A673 (cell line): ENCODE measurements at regions of chr12 and their contacts with region 1.

Region 1: GRCh38 chr12:45215419-45216229 is at the start of gene ANO6:
- DNase-seq: peak; percentile 97
- H3K4me3 ChIP-seq: peak within 1 kb of the TSS; percentile 68
- H3K27ac ChIP-seq: peak within 1 kb of the TSS; percentile 93
- H3K4me1 ChIP-seq: peaks cover 35% of the 10 kb centered on the region
- H3K27me3 ChIP-seq: no peaks in the 10 kb centered on the region
- CTCF ChIP-seq: peak; percentile 48; the same call in 1 of the 2 replicates
- total RNA-seq, gene ANO6: 59.3 TPM in 2 replicates

Region 2: DNA sequence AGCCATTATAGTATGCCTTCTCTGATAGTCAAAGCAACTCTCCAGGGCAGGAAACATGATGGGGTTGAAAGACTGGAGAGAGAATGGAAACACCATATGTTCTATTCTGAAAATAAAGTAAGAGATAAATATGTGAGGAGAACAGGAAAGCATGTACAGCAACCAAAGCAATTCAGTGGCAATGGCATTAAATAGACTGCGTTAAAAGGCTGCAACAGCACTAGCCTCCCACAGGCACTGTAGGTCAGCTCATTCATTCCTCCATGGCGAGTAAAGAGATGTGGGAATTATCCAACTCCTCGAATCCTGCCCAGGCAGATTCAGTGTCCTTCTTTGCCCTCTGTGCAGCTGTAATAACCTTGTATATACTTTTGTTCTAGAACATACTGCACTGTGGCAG is 44.1 kb after region 1 on chr12:
- CTCF ChIA-PET with region 1: no interaction called
- POLR2A ChIA-PET with region 1: no interaction called
- intact Hi-C with region 1: loop called (anchors 2 kb)
- DNase-seq: no peak
- H3K4me3 ChIP-seq: no peak overlapping the region
- H3K27ac ChIP-seq: peak overlapping the region; percentile 73
- H3K4me1 ChIP-seq: peaks cover 68% of the 10 kb centered on the region
- H3K27me3 ChIP-seq: no peaks in the 10 kb centered on the region
- CTCF ChIP-seq: no peak

Region 3: DNA sequence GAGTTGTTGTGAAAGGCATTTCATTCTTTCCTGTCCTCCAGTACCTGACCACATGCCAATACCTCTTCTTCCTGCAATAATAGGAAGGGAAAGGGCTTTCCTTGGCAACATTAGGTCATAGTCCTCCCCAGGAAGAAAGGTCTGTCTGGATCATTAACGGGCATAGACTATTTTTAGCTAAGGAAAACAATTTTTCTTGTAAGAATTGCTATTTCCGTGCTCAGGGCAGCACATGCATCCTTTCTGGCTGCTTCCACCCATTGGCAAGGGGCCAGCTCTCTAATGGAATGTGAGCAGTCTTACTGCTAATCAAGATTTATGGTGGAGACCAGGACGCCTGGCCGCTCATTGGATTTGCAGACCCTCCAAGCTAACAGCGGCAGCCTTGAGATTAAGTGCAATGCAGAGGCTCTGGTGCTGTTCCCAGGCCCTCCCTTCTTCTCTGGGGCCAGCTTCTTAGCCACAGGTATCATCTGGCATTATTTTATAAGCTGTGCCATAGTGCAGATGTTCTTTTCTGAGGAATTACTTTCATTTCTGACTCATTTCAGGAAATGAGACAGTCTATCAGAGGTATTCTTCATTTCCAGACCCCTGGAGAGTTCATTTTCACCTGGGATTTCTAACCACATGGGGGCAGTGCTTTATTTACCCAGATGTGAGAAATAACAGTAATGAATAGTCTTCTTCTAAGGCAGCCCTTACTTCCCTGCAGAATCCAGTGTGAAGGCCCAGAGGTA is 53.2 kb after region 1 on chr12:
- CTCF ChIA-PET with region 1: no interaction called
- POLR2A ChIA-PET with region 1: no interaction called
- intact Hi-C with region 1: loop called (anchors 2 kb)
- DNase-seq: peak; percentile 95
- H3K4me3 ChIP-seq: peak overlapping the region; percentile 3
- H3K27ac ChIP-seq: no peak overlapping the region
- H3K4me1 ChIP-seq: peaks cover 36% of the 10 kb centered on the region
- H3K27me3 ChIP-seq: no peaks in the 10 kb centered on the region
- CTCF ChIP-seq: peak; percentile 63

Region 4: DNA sequence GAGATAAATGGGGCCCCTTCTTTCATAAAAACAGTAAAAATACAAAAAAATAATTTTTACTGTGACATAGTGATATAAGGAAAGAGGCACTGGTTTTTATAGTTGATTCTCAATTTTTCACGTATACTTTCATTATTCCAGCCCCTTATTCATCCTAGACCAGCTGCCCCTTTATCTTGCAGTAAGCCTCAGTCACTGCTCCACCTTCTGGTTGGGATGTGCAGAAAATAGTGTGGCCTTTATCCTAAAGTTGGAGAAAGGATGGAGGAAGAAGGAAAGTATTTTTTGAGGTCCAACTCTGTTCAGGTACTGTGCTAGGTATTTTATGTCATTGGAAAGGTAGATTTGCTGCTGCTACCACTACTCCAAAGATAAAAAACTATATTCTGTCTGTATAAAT is 172.9 kb after region 1 on chr12:
- CTCF ChIA-PET with region 1: no interaction called
- POLR2A ChIA-PET with region 1: no interaction called
- intact Hi-C with region 1: loop called (anchors 2 kb)
- DNase-seq: peak; percentile 64
- H3K4me3 ChIP-seq: no peak overlapping the region
- H3K27ac ChIP-seq: no peak overlapping the region
- H3K4me1 ChIP-seq: no peaks in the 10 kb centered on the region
- H3K27me3 ChIP-seq: no peaks in the 10 kb centered on the region
- CTCF ChIP-seq: peak; percentile 73

Region 5: DNA sequence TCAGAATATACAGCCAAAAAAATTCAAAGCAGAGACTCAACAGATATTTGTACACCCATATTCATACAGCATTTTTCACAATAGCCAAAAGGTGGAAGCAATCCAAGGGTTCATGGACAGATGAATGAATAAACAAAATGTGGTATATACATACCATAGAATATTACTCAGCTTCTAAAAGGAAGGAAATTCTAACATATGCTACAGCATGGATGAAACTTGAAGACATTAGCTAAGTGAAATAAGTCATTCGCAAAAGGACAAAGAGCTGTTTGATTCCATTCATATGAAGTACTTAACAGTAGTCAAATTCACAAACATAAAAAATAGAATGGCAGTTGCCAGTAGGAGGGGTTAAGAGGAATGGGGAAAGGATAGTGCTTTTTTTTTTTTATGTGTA is 422.1 kb after region 1 on chr12:
- CTCF ChIA-PET with region 1: no interaction called
- POLR2A ChIA-PET with region 1: no interaction called
- intact Hi-C with region 1: no loop called
- DNase-seq: no peak
- H3K4me3 ChIP-seq: no peak overlapping the region
- H3K27ac ChIP-seq: no peak overlapping the region
- H3K4me1 ChIP-seq: no peaks in the 10 kb centered on the region
- H3K27me3 ChIP-seq: no peaks in the 10 kb centered on the region
- CTCF ChIP-seq: no peak